H1 (cell line): ENCODE measurements at regions of chr1 and their contacts with region 1.

Region 1: GRCh38 chr1:181117638-181118449 is 29.3 kb downstream of the IER5 start:
- DNase-seq: no peak
- H3K4me3 ChIP-seq: no peak overlapping the region
- H3K27ac ChIP-seq: no peak overlapping the region
- H3K4me1 ChIP-seq: peaks cover 2 to 9% (median 7%) of the 10 kb centered on the region in 4 experiments; a peak in 5 of 7 replicates
- H3K27me3 ChIP-seq: no peaks in the 10 kb centered on the region; a peak in 1 of 7 replicates
- CTCF ChIP-seq: no peak
- EP300 ChIP-seq: no peak
- POLR2A ChIP-seq: no peak
- RAD21 ChIP-seq: no peak

Region 2: GRCh38 chr1:181105134-181106021 is 12.5 kb before region 1 on chr1:
- CTCF ChIA-PET with region 1: interaction called, 11 read pairs
- POLR2A ChIA-PET with region 1: interaction called, 15 read pairs
- DNase-seq: peak in 1 of 2 experiments; percentile 86
- H3K4me3 ChIP-seq: peak overlapping the region; percentile 53 to 75 (median 64)
- H3K27ac ChIP-seq: peak overlapping the region; percentile 62; the same call in 1 of the 2 replicates
- H3K4me1 ChIP-seq: peaks cover 8 to 40% (median 21%) of the 10 kb centered on the region in 4 experiments
- H3K27me3 ChIP-seq: peaks cover 9 to 42% (median 41%) of the 10 kb centered on the region in 4 experiments
- CTCF ChIP-seq: no peak
- EP300 ChIP-seq: no peak
- POLR2A ChIP-seq: 0 out of 3 replicates have a peak, but pooled peaks of 1 of the 2 experiments have one; percentile 27
- RAD21 ChIP-seq: no peak